CD8-positive, alpha-beta T cell (primary cell): ENCODE measurements at regions of chr22 and their contacts with region 1.

Region 1: GRCh38 chr22:43385770-43386641 is 25.8 kb upstream of the MPPED1 start:
- DNase-seq: peak; percentile 46 to 85 (median 73)
- ATAC-seq: peak; percentile 82
- H3K4me3 ChIP-seq: no peak overlapping the region
- H3K4me3 Mint-ChIP-seq: no peak overlapping the region
- H3K27ac ChIP-seq: no peak overlapping the region
- H3K27ac Mint-ChIP-seq: no peak overlapping the region
- H3K4me1 ChIP-seq: peaks cover 4% of the 10 kb centered on the region
- H3K4me1 Mint-ChIP-seq: peaks cover 7% of the 10 kb centered on the region
- H3K27me3 ChIP-seq: peaks cover 7 to 14% of the 10 kb centered on the region in 2 experiments
- H3K27me3 Mint-ChIP-seq: peaks cover 18% of the 10 kb centered on the region
- CTCF ChIP-seq: peak; percentile 58

Region 2: GRCh38 chr22:43213051-43213450 is 173.0 kb before region 1 on chr22:
- CTCF ChIA-PET with region 1: no interaction called
- POLR2A ChIA-PET with region 1: no interaction called
- intact Hi-C with region 1: no loop called
- DNase-seq: no peak
- ATAC-seq: no peak
- H3K4me3 ChIP-seq: no peak overlapping the region
- H3K4me3 Mint-ChIP-seq: no peak overlapping the region
- H3K27ac ChIP-seq: no peak overlapping the region
- H3K27ac Mint-ChIP-seq: no peak overlapping the region
- H3K4me1 ChIP-seq: no peaks in the 10 kb centered on the region
- H3K4me1 Mint-ChIP-seq: no peaks in the 10 kb centered on the region
- H3K27me3 ChIP-seq: no peaks in the 10 kb centered on the region
- H3K27me3 Mint-ChIP-seq: no peaks in the 10 kb centered on the region
- CTCF ChIP-seq: no peak

Region 3: DNA sequence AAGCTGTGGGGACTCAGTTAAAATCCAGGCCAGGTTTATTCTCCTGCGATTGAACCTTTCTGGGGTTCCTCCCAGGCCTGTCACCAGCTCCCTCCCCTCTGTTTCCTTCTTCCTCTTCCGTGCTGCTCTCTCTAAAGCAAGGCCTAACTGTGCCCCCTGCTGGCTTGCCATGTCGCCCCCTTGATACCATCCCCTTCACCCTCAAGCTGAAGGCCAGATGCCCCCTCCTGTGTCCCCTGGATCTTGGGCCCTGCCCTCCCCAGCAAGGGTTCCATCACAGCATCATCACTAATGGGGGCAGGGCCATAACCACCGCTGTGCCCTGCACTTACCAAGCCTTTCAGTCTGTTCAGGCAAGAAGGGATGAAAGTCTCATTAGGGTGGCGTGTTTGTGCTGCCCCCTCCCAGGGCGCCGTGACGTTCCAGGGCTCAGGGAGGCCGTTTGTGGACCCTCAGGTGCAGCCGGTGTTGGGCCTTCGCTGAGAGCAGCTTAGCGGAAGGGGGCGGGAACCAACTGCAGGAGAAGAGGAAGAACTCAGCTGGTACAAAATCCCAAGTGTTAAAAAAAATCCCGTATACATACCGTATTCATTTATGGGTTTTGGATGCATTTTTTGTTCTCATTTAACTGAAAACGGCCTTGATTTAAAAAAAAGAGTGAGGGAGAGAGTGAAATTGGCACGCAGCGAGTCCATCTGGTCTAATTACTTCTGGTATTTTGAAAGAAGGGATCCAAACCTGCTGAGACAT is 95.7 kb after region 1 on chr22:
- CTCF ChIA-PET with region 1: interaction called, 4 read pairs
- POLR2A ChIA-PET with region 1: no interaction called
- intact Hi-C with region 1: loop called in 1 of 2 experiments (anchors 2 kb)
- DNase-seq: peak in 6 of 9 experiments; percentile 7 to 62 (median 41)
- ATAC-seq: peak; percentile 70
- H3K4me3 ChIP-seq: peak overlapping the region; percentile 20 to 25
- H3K4me3 Mint-ChIP-seq: peak overlapping the region; percentile 76
- H3K27ac ChIP-seq: peak overlapping the region; percentile 32 to 53
- H3K27ac Mint-ChIP-seq: peak overlapping the region; percentile 89
- H3K4me1 ChIP-seq: peaks cover 4% of the 10 kb centered on the region
- H3K4me1 Mint-ChIP-seq: peaks cover 20% of the 10 kb centered on the region
- H3K27me3 ChIP-seq: no peaks in the 10 kb centered on the region
- H3K27me3 Mint-ChIP-seq: peaks cover under 1% of the 10 kb centered on the region
- CTCF ChIP-seq: no peak